MCF 10A (cell line): ENCODE measurements at regions of chr1 and their contacts with region 1.

Region 1: DNA sequence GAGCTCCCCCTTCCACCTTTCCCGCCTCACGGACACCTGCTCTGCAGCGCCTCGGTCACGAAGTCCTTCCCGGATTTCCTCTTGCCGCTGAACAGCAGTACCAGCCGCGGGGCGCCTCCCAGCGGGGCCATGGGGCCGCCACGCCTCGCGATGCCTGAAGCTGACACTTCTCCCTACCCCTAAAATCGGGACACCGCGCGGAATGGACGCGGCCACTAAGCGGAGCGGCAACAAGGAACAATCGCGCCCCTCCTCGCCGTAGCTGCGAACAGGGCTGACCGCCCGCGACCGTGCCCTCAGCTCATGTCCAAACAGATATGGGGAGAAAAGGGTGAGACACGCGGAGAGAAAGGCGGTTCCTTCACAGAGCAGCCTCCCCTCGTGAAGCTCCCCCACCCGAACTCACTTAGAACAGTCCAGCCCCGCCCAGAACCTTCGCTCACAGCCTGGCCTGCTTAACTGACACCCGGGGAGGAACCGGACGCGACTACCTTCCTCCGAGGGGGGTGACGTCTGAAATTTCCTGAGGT is at the start of gene PMVK:
- DNase-seq: peak; percentile 99
- H3K4me3 Mint-ChIP-seq: peak within 1 kb of the TSS; percentile 90
- H3K27ac Mint-ChIP-seq: peak within 1 kb of the TSS; percentile 100
- H3K4me1 Mint-ChIP-seq: peaks cover 49% of the 10 kb centered on the region
- H3K27me3 Mint-ChIP-seq: no peaks in the 10 kb centered on the region
- CTCF ChIP-seq: peak; percentile 26
- total RNA-seq, gene PMVK: 57.7 and 68.9 TPM in 2 replicates

Region 2: GRCh38 chr1:154906621-154907081 is 30.0 kb before region 1 on chr1:
- CTCF ChIA-PET with region 1: interaction called, 7 read pairs
- POLR2A ChIA-PET with region 1: interaction called, 14 read pairs
- intact Hi-C with region 1: no loop called
- DNase-seq: peak; percentile 57
- H3K4me3 Mint-ChIP-seq: no peak overlapping the region
- H3K27ac Mint-ChIP-seq: no peak overlapping the region
- H3K4me1 Mint-ChIP-seq: no peaks in the 10 kb centered on the region
- H3K27me3 Mint-ChIP-seq: no peaks in the 10 kb centered on the region
- CTCF ChIP-seq: peak; percentile 45